ENCODE measurements at regions of chr6 and their contacts with region 1.

Region 1: DNA sequence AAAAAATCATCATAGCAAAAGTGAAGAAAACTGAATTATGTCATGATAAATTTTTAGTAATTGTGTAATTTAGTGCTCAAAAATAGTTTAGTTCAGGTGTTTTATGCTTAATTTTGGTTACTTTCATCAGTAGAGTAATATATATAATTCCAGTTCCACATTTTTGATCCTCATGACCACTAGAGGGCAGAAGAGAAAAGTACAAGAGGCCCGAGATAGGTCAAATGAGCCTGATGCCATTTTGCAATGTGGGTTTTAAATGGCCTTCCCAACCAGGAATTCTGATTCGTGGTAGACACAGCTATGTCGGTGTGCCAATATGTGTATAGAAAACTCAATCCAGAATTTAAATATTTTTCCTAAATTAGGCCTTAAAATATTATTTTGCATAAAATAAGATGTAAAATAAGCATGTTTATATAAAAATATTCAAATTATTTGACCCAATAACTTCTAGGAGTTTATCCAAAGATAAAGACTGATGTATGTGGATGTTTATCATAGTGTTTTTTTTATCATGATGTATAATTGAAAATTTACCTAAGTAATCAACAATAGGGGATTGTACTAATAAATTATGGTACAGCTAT is 159.7 kb upstream of the RPS6KA2 start:
- DNase-seq: peak in 1 of 2 donors; percentile 81
- ATAC-seq: peak; percentile 50 to 82 (median 67)
- H3K4me3 ChIP-seq: no peak overlapping the region
- H3K4me3 Mint-ChIP-seq: no peak overlapping the region
- H3K27ac ChIP-seq: no peak overlapping the region
- H3K27ac Mint-ChIP-seq: no peak overlapping the region
- H3K4me1 ChIP-seq: no peaks in the 10 kb centered on the region
- H3K4me1 Mint-ChIP-seq: no peaks in the 10 kb centered on the region
- H3K27me3 ChIP-seq: no peaks in the 10 kb centered on the region
- H3K27me3 Mint-ChIP-seq: peaks cover 11 to 13% of the 10 kb centered on the region in 2 donors
- CTCF ChIP-seq: peak; percentile 79

Region 2: DNA sequence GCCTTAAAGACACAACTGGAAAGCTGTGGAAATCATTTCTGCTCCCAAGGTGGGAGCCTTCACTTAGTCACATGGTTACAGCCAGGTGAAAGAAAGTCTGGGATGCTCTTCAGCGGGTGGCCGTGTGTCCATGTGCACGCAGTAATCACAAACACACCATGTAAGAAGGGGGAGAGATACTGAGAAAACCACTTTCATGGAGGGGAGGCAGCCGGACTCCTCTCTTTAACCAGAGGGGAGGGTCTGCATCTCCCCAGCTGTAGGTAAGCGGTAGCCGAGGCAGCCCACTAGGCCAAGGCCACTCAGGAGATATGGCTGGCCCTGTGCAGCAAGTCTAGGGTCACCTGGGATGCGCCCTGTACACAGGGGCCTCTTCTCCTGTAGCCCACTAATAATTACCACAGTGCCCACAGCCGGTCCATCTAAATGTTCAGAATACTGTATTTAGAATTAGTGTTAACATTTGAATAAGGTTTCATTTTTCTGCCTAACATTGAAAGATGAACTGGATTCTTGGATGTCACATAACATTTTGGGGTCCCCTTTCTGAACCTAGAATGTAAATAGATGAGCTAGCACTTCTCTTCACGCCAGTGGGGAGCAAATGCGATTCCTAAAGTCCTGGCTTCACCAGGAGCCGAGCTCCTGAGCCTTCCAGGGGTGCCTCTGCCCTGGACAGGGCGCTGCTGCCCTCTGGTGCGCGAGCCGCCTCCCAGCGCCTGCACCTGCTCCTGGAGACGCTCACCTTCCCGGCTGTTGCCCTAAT is 355.1 kb after region 1 on chr6:
- intact Hi-C with region 1: loop called (anchors 1 kb)
- DNase-seq: peak in 1 of 2 donors; percentile 75
- ATAC-seq: peak in 2 of 3 donors; percentile 57 to 72
- H3K4me3 ChIP-seq: no peak overlapping the region
- H3K4me3 Mint-ChIP-seq: no peak overlapping the region
- H3K27ac ChIP-seq: no peak overlapping the region
- H3K27ac Mint-ChIP-seq: no peak overlapping the region
- H3K4me1 ChIP-seq: peaks cover 23% of the 10 kb centered on the region
- H3K4me1 Mint-ChIP-seq: peaks cover 16% of the 10 kb centered on the region in 2 donors
- H3K27me3 ChIP-seq: no peaks in the 10 kb centered on the region
- H3K27me3 Mint-ChIP-seq: peaks cover 25 to 43% of the 10 kb centered on the region in 2 donors
- CTCF ChIP-seq: peak; percentile 51